AG04449 (cell line): ENCODE measurements at regions of chr21 and their contacts with region 1.

Region 1: GRCh38 chr21:37711836-37712568 is 204.3 kb downstream of the KCNJ6 start:
- DNase-seq: no peak
- H3K4me3 ChIP-seq: no peak overlapping the region
- CTCF ChIP-seq: peak; percentile 90

Region 2: DNA sequence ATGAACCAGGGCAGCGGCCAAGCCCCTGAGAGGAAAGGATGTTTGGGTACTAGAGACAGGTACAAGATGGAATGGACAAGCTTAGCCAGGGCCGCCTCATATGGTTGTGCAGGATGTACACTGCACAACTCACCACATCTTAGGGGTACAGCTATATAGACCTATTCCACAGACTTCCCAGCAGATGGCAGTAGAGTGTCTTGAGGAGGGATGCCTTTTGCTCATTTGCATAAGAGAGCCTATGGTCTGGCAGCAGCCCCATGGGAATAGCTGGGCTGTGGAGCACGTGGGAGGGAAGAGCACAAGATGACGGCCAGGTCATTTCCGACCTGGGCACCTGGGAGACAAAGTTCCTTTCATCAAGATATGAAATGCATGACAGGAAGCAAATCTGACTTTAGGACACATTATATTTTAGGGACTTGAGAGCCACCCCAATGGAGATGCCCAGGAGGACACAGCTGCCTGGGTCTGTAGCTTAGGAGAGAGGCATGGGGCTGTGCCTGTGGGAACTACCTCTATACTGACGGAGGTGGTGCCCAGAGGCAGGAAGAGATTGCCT is 11.3 kb before region 1 on chr21:
- CTCF ChIA-PET with region 1: interaction called, 61 read pairs
- POLR2A ChIA-PET with region 1: no interaction called
- DNase-seq: peak; percentile 45
- H3K4me3 ChIP-seq: no peak overlapping the region
- CTCF ChIP-seq: peak; percentile 72

Region 3: GRCh38 chr21:37742532-37742931 is 30.5 kb after region 1 on chr21:
- CTCF ChIA-PET with region 1: interaction called, 19 read pairs
- POLR2A ChIA-PET with region 1: no interaction called
- DNase-seq: no peak
- H3K4me3 ChIP-seq: no peak overlapping the region
- CTCF ChIP-seq: no peak

Region 4: DNA sequence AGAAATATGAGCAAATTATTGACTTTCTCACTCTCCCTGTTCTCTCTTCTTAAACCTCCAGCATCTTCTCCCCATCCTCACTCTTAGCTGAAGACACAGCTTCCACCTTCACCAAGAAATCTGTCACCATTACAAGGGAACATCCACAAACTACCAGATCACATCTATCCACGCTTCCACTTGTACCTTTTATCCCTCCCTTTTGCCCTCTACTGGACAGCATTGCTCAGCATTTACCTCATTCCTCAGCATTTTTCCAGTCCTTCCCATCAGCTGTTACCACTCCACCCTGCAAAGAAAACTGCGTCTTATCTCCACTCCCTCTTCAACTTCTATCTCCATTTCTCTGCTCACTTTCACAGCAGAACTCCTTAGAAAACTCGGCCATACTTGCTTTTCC is 161.7 kb after region 1 on chr21:
- CTCF ChIA-PET with region 1: interaction called, 29 read pairs
- POLR2A ChIA-PET with region 1: no interaction called
- DNase-seq: no peak
- H3K4me3 ChIP-seq: no peak overlapping the region
- CTCF ChIP-seq: peak; percentile 30

Region 5: DNA sequence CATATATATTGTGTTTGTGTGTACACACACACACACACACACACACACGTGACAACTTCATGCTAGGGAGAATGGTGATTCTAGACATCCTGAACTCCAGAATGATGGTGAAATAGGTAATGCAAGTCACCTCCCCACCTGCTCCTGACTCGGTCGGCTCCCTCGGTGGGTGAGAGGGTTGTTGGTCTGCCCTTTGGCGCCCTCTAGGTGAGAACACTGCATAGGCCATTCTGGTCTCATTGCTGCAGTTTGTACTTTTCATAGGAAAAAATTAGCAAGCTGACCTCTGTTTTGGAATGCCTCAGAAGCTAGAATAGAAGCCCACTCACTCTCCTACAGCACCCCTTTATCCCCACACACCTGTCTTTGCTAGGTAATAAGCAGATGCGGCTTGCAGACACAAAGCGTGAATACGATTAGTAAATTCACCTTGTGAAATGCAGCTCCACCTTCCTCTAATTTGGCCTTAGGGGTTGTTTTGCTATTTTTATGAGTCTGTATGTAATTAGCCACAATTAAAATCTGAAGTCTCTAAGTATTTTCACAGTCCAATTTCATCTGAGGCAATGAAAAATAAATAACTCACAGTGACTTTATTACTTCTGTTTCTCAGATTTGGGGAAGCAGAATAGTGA is 414.8 kb after region 1 on chr21:
- CTCF ChIA-PET with region 1: interaction called, 35 read pairs
- POLR2A ChIA-PET with region 1: no interaction called
- DNase-seq: no peak
- H3K4me3 ChIP-seq: no peak overlapping the region
- CTCF ChIP-seq: peak; percentile 84

Region 6: DNA sequence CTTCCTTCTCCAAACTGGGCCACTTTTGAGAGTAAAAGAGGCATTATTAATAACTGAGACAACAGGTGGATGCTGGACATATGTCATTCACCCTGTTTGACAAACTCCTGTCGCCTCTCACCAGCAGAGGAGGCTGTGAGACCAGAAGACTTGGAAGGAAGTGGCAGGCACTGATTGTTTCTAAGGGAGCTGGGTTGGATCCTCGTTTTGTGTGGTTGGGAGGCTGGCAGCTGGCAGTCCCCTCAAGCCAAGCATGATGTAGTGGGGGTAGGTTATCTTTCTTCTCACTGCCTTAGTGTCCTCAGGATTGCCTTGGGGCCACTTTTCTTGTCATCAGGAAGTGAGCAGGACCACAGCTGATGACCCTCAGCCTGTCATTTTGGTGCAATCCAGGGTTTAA is 458.3 kb after region 1 on chr21:
- CTCF ChIA-PET with region 1: interaction called, 10 read pairs
- POLR2A ChIA-PET with region 1: no interaction called
- DNase-seq: no peak
- H3K4me3 ChIP-seq: no peak overlapping the region
- CTCF ChIP-seq: peak; percentile 49